ENCODE measurements at regions of chr12 and their contacts with region 1.

Region 1: GRCh38 chr12:4307593-4308333 is 13.2 kb upstream of the TIGAR start:
- DNase-seq: peak in 1 of 2 donors; percentile 78
- H3K4me3 ChIP-seq: no peak overlapping the region
- H3K27ac ChIP-seq: no peak overlapping the region
- H3K4me1 ChIP-seq: peaks cover 0 to 3% of the 10 kb centered on the region in 2 donors
- H3K27me3 ChIP-seq: no peaks in the 10 kb centered on the region
- CTCF ChIP-seq: peak; percentile 61 to 77 (median 61)

Region 2: GRCh38 chr12:4526923-4527546 is 219.3 kb after region 1 on chr12:
- intact Hi-C with region 1: loop called (anchors 2 kb)
- DNase-seq: no peak
- H3K4me3 ChIP-seq: no peak overlapping the region
- H3K27ac ChIP-seq: no peak overlapping the region
- H3K4me1 ChIP-seq: no peaks in the 10 kb centered on the region
- H3K27me3 ChIP-seq: no peaks in the 10 kb centered on the region
- CTCF ChIP-seq: peak; percentile 28 to 51 (median 48)